ENCODE measurements at regions of chr1 and their contacts with region 1.

Region 1: GRCh38 chr1:221794079-221794670 is 52.3 kb upstream of the DUSP10 start:
- DNase-seq: peak; percentile 54
- ATAC-seq: peak; percentile 91
- H3K4me3 Mint-ChIP-seq: no peak overlapping the region
- H3K27ac Mint-ChIP-seq: peak overlapping the region; percentile 89
- H3K4me1 Mint-ChIP-seq: peaks cover 34% of the 10 kb centered on the region
- H3K27me3 Mint-ChIP-seq: no peaks in the 10 kb centered on the region

Region 2: GRCh38 chr1:221557013-221557412 is 237.2 kb before region 1 on chr1:
- CTCF ChIA-PET with region 1: no interaction called
- POLR2A ChIA-PET with region 1: no interaction called
- intact Hi-C with region 1: no loop called
- DNase-seq: no peak
- ATAC-seq: no peak
- H3K4me3 Mint-ChIP-seq: no peak overlapping the region
- H3K27ac Mint-ChIP-seq: no peak overlapping the region
- H3K4me1 Mint-ChIP-seq: no peaks in the 10 kb centered on the region
- H3K27me3 Mint-ChIP-seq: no peaks in the 10 kb centered on the region

Region 3: DNA sequence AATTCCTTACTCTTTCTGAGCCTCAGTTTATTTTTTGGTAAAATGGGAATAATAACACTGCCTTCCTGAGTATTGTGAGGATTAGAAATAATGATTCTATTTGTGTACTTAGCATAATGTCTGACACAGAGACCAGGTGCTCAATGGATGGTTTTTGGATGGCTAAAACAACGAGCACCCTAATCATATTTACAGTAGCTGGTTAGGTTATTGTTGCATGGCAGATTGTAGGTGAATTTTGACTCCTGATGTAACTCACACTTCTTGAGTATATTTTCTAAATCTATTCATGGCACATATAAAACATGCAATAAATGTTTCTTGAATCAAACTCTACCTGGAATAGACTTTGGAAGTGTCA is 40.4 kb before region 1 on chr1:
- CTCF ChIA-PET with region 1: no interaction called
- POLR2A ChIA-PET with region 1: no interaction called
- intact Hi-C with region 1: loop called in 1 of 2 experiments (anchors 2 kb)
- DNase-seq: no peak
- ATAC-seq: peak; percentile 47
- H3K4me3 Mint-ChIP-seq: no peak overlapping the region
- H3K27ac Mint-ChIP-seq: peak overlapping the region; percentile 77
- H3K4me1 Mint-ChIP-seq: peaks cover 37% of the 10 kb centered on the region
- H3K27me3 Mint-ChIP-seq: peaks cover 5% of the 10 kb centered on the region

Region 4: DNA sequence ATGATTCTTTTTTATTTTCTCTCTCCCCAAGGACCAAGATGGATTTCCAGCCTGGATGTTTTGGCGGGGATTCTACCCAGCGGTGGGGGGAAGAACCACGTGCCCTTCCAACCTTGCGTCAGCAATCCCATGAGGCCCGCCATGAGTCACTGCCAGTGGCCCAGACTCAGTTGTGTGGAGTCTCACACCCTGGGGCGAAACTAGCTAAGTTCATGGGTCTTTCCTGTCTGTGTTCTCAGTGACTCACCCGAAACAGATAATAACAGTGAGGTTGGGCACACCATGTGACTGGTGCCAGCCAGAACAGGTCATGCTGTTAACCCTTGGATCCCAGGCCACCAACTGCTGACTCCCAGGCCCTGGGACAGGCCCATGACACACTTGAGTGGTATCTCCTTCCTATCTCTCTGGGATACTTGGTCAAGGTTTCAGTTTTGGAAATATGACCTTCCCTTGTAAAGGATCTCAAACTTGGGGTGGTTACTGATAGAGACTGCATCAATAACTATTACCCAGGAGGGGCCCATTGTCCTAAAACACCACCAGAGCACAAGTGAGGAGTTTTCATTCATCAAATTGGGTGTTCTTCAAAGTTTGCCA is 45.7 kb after region 1 on chr1:
- CTCF ChIA-PET with region 1: interaction called, 5 read pairs
- POLR2A ChIA-PET with region 1: no interaction called
- intact Hi-C with region 1: loop called in 1 of 2 experiments (anchors 1 kb)
- DNase-seq: peak; percentile 85
- ATAC-seq: peak; percentile 98
- H3K4me3 Mint-ChIP-seq: no peak overlapping the region
- H3K27ac Mint-ChIP-seq: peak overlapping the region; percentile 85
- H3K4me1 Mint-ChIP-seq: peaks cover 38% of the 10 kb centered on the region
- H3K27me3 Mint-ChIP-seq: peaks cover 6% of the 10 kb centered on the region

Measured in activated CD4-positive, alpha-beta T cell treated with anti-CD3 and anti-CD28 coated beads for 36 hours (primary cell).